T-cell (primary cell): ENCODE measurements at regions of chr19 and their contacts with region 1.

Region 1: DNA sequence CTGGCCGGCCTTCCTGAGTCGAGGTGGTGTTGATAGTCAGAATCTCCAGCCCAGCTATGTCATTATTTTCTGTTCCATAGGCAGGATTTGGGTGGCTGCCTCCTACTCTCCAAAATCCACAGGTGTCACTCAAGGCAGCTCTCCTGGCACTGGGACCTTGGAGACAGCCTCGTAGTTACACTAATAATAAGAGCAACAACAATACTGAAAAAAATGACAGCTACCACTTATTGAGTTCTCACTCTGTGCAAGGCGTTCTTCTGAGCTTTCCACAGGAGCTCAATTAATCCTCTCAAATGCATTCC is 12.2 kb upstream of the KLK12 start:
- DNase-seq: no peak
- ATAC-seq: no peak
- H3K4me3 ChIP-seq: no peak overlapping the region
- H3K4me3 Mint-ChIP-seq: no peak overlapping the region
- H3K27ac ChIP-seq: no peak overlapping the region
- H3K27ac Mint-ChIP-seq: no peak overlapping the region
- H3K4me1 ChIP-seq: no peaks in the 10 kb centered on the region
- H3K4me1 Mint-ChIP-seq: no peaks in the 10 kb centered on the region
- H3K27me3 ChIP-seq: peaks cover 0 to 8% of the 10 kb centered on the region in 2 experiments
- H3K27me3 Mint-ChIP-seq: peaks cover 12 to 18% of the 10 kb centered on the region in 2 donors

Region 2: DNA sequence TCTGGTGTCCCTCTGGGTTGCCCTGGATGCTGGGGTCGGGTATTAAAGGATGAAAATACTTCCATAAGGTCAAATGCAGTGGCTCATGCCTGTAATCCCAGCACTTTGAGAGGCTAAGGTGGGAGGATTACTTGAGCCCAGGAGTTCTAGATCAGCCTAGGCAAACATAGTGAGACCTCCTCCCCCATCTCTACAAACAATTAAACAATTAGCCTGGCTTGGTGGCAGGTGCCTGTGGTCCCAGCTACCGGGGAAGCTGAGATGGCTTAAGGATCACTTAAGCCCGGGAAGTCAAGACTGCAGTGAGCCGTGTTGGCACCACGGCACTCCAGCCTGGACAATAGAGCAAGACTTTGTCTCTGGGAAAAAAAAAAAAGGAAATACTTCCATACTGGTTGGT is 22.1 kb before region 1 on chr19:
- CTCF ChIA-PET with region 1: interaction called in 1 of 2 experiments, 11 read pairs
- POLR2A ChIA-PET with region 1: no interaction called
- DNase-seq: no peak
- ATAC-seq: no peak
- H3K4me3 ChIP-seq: no peak overlapping the region
- H3K4me3 Mint-ChIP-seq: no peak overlapping the region
- H3K27ac ChIP-seq: no peak overlapping the region
- H3K27ac Mint-ChIP-seq: no peak overlapping the region
- H3K4me1 ChIP-seq: no peaks in the 10 kb centered on the region
- H3K4me1 Mint-ChIP-seq: peaks cover 0 to 3% (median 1%) of the 10 kb centered on the region in 3 donors
- H3K27me3 ChIP-seq: peaks cover 2 to 74% of the 10 kb centered on the region in 2 experiments
- H3K27me3 Mint-ChIP-seq: peaks cover 45 to 63% of the 10 kb centered on the region in 2 donors

Region 3: DNA sequence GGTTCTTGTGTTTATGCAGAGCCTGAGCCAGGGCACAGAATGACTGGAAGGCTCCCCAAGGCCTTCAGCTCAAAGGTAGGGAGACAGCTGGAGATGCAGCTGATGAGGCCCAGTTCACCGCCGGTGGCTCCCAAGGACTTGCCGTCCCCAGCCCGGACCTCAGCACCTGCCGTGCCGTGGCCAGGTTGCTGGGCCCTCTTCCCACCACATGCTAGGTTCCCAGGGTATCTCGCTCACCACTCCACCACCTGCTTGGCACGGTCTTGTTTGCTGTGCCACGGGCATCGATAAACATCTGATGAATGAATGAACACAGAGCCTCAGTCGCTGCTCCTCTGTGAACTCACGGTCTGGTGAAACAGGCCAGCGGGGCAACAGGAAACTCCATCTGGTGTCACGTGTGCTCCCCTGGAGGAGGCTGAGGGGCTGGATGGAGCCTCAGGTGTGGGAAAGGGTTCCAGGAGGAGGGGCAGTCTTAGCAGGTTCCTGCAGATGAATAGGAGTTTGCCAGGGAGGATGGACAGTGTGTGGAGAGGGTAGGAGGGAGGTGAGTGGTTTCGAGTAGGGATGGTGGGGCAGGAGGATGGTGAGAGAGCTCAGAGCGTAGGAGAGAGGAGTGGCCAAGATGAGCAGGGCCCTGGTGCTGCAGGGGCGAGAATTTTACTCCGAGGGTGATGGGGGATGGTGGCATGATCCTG is 39.3 kb after region 1 on chr19:
- CTCF ChIA-PET with region 1: no interaction called
- POLR2A ChIA-PET with region 1: no interaction called
- DNase-seq: no peak
- ATAC-seq: no peak
- H3K4me3 ChIP-seq: no peak overlapping the region
- H3K4me3 Mint-ChIP-seq: no peak overlapping the region
- H3K27ac ChIP-seq: no peak overlapping the region
- H3K27ac Mint-ChIP-seq: no peak overlapping the region
- H3K4me1 ChIP-seq: no peaks in the 10 kb centered on the region
- H3K4me1 Mint-ChIP-seq: no peaks in the 10 kb centered on the region
- H3K27me3 ChIP-seq: peaks cover 0 to 17% of the 10 kb centered on the region in 2 experiments
- H3K27me3 Mint-ChIP-seq: peaks cover 16% of the 10 kb centered on the region in 2 donors

Region 4: GRCh38 chr19:51147663-51148062 is 100.7 kb after region 1 on chr19:
- CTCF ChIA-PET with region 1: no interaction called
- POLR2A ChIA-PET with region 1: no interaction called
- DNase-seq: no peak
- ATAC-seq: no peak
- H3K4me3 ChIP-seq: no peak overlapping the region
- H3K4me3 Mint-ChIP-seq: no peak overlapping the region
- H3K27ac ChIP-seq: no peak overlapping the region
- H3K27ac Mint-ChIP-seq: no peak overlapping the region
- H3K4me1 ChIP-seq: peaks cover 0 to 7% of the 10 kb centered on the region in 2 experiments
- H3K4me1 Mint-ChIP-seq: peaks cover 7 to 16% (median 11%) of the 10 kb centered on the region in 3 donors
- H3K27me3 ChIP-seq: peaks cover 0 to 18% of the 10 kb centered on the region in 2 experiments
- H3K27me3 Mint-ChIP-seq: peaks cover 0 to 10% of the 10 kb centered on the region in 2 donors